ENCODE measurements at regions of chr11 and their contacts with region 1.

Region 1: DNA sequence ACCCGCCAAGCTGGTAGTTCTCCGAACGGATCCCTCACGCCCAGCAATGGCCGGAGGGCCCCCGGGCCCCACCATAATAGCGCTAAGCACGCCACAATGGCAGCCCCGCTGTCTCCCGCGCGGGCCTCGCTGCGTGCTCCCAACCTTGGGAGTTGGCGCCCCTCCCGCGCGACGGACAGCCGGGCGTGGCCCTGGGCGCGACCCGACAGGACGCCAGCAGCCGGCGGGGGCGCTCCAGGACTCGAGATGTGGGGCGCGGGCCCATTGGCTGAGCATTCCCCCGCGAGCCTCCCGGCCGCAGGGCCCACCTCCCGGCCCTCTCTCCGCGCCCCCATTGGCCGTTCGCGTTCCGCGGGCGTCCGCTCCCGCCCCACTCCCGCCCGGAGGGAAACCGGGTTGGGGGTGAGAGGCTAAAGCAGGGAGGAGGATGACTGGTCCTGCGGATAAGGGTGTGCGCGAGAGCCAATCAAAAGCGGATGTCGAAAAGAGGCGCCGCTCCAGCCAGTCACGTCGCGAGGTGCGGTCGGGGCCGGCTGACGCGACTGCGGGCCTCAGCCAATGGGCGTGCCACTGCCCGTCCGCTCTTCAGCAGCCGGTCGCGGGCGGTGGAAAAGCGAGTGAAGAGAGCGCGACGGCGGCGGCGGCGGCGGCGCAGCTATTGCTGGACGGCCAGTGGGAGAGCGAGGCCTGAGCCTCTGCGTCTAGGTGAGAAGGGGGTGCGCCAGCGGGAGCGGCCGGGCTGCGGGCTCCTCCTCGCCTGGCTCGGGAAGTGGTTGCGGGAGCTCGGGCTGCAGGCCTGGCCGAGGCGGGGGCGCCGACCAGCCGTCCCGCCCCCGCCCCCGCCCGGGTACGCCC is at the start of gene FAR1:
- DNase-seq: peak; percentile 89 to 97 (median 96)
- ATAC-seq: peak; percentile 94
- H3K4me3 ChIP-seq: peak within 1 kb of the TSS; percentile 90
- H3K4me3 Mint-ChIP-seq: peak within 1 kb of the TSS; percentile 90 to 100 (median 97)
- H3K27ac ChIP-seq: peak within 1 kb of the TSS; percentile 69
- H3K27ac Mint-ChIP-seq: peak within 1 kb of the TSS; percentile 69 to 99 (median 93)
- H3K4me1 ChIP-seq: peaks cover 14 to 17% of the 10 kb centered on the region in 2 donors
- H3K4me1 Mint-ChIP-seq: peaks cover 37 to 48% (median 45%) of the 10 kb centered on the region in 7 donors
- H3K27me3 ChIP-seq: no peaks in the 10 kb centered on the region
- H3K27me3 Mint-ChIP-seq: peaks cover 0 to 21% (median 7%) of the 10 kb centered on the region in 5 donors
- total RNA-seq, gene FAR1: 31.4 to 53.7 (median 33.8) TPM

Region 2: DNA sequence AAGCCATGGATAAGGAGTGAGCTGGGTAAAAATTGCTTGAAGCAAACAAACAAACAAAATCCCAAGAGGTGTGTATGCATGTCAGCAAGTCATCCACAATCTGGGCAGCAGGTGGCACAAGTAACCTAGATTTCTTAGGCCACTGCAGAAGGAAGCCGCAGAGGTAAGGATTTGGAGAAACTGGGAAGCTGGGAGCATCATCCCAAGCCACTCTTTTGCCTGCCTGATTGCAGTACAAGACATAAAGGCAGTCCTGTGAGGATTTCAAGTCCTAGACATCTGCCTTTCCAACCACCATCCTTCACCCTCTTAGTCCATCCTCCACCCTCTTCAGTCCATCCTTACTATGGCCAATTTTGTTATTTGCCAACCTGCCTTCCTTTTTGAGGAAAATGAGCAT is 457.9 kb before region 1 on chr11:
- CTCF ChIA-PET with region 1: no interaction called
- POLR2A ChIA-PET with region 1: no interaction called
- intact Hi-C with region 1: loop called in 1 of 2 experiments (anchors 10 kb)
- DNase-seq: peak in 3 of 9 donors; percentile 7 to 9 (median 8)
- ATAC-seq: no peak
- H3K4me3 ChIP-seq: no peak overlapping the region
- H3K4me3 Mint-ChIP-seq: no peak overlapping the region
- H3K27ac ChIP-seq: no peak overlapping the region
- H3K27ac Mint-ChIP-seq: peak overlapping the region in 1 of 9 donors; percentile 32
- H3K4me1 ChIP-seq: peaks cover 0 to 6% of the 10 kb centered on the region in 2 donors
- H3K4me1 Mint-ChIP-seq: peaks cover 16 to 33% (median 23%) of the 10 kb centered on the region in 7 donors
- H3K27me3 ChIP-seq: no peaks in the 10 kb centered on the region
- H3K27me3 Mint-ChIP-seq: peaks cover 0 to 3% (median 0%) of the 10 kb centered on the region in 5 donors

Region 3: DNA sequence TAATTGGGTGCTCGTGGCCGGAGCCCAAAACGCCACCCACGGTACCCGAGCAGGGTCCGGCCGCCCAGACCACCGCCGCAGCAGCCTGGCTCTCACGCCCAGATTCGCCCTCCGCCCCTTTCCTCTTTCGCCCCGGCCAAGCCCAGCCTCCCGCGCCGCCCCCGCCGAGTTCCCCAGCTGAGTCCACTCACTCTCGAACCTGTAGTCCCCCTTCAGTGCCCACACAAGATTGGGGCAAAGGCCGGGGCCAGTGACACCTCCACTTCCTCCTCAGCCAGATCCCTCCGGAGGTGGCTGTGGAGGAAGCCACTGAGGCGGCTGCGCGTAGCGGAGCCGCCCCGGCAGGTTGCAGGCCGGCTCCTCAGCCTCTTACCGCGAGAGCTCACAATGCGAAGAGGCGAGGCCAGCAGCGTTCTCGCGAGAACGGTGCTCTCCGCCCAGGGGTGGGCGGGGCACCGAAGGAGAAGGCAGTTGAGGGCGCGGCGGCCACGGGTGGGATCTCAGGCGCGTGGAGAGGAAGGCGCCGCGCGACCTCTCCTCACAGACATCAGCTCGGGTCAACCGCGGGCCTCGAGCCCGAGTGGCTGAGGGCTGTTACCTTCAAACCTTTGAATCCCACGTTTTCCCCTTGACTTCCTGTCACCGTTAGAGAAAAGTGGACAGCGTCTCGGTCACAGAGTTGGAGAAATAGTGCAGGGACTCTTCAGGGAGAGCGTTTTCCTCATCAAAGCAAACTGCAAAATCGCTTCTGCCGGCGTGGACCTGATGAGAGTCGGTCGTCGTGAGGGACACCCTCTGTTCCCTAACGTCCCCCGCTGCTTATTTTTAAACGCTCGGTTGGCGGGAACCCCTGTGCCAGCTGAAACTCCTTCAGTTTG is 205.2 kb before region 1 on chr11 and contains the start of gene BTBD10:
- CTCF ChIA-PET with region 1: no interaction called
- POLR2A ChIA-PET with region 1: no interaction called
- intact Hi-C with region 1: loop called (anchors 1 kb)
- DNase-seq: peak; percentile 87 to 94 (median 91)
- ATAC-seq: peak; percentile 100
- H3K4me3 ChIP-seq: peak within 1 kb of the TSS; percentile 98
- H3K4me3 Mint-ChIP-seq: peak within 1 kb of the TSS; percentile 97 to 100 (median 99)
- H3K27ac ChIP-seq: peak within 1 kb of the TSS; percentile 96
- H3K27ac Mint-ChIP-seq: peak within 1 kb of the TSS; percentile 93 to 100 (median 97)
- H3K4me1 ChIP-seq: peaks cover 18 to 20% of the 10 kb centered on the region in 2 donors
- H3K4me1 Mint-ChIP-seq: peaks cover 22 to 54% (median 46%) of the 10 kb centered on the region in 7 donors
- H3K27me3 ChIP-seq: no peaks in the 10 kb centered on the region
- H3K27me3 Mint-ChIP-seq: peaks cover 0 to 5% (median 0%) of the 10 kb centered on the region in 5 donors
- total RNA-seq, gene BTBD10: 16.3 to 25.2 (median 19.4) TPM

Region 4: DNA sequence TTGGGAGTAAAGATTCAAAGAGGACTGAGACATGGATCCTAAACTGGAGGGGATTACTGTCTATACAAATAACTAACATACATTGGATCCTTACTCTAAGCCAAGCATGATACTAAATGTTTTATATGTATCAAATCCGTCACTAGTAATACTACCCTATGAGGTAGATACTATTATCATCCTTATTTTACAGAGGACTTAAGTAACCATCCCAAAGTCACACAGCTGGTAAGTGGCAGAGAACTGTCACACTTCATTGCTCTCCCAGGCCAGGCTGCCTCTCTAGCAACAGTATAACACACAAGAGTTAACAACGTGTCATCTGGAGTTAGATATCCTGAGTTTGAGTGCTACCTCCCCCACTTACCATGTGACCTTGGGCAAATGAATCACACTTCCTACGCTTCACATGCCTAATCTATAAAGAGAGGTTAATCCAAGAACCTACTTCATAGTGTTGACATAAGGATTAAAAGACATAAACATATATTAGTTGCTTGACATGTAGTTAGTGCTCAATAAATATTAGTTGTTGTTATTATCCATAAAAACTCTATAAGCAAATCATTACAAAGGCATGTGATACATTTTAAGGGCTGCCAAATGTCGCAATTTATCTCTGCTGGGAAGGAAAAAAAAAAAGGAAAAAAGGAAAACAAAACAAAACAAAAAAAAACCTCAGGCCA is 260.4 kb after region 1 on chr11:
- CTCF ChIA-PET with region 1: no interaction called
- POLR2A ChIA-PET with region 1: interaction called, 4 read pairs
- intact Hi-C with region 1: loop called (anchors 5 to 10 kb)
- DNase-seq: no peak
- ATAC-seq: no peak
- H3K4me3 ChIP-seq: no peak overlapping the region
- H3K4me3 Mint-ChIP-seq: no peak overlapping the region
- H3K27ac ChIP-seq: no peak overlapping the region
- H3K27ac Mint-ChIP-seq: peak overlapping the region in 3 of 9 donors; percentile 0 to 49 (median 25)
- H3K4me1 ChIP-seq: peaks cover 21 to 25% of the 10 kb centered on the region in 2 donors
- H3K4me1 Mint-ChIP-seq: peaks cover 24 to 45% (median 39%) of the 10 kb centered on the region in 7 donors
- H3K27me3 ChIP-seq: no peaks in the 10 kb centered on the region
- H3K27me3 Mint-ChIP-seq: no peaks in the 10 kb centered on the region

Region 5: GRCh38 chr11:14075118-14076078 is 407.1 kb after region 1 on chr11:
- CTCF ChIA-PET with region 1: no interaction called
- POLR2A ChIA-PET with region 1: no interaction called
- intact Hi-C with region 1: loop called in 1 of 2 experiments (anchors 1 kb)
- DNase-seq: peak; percentile 8 to 79 (median 67)
- ATAC-seq: peak; percentile 94
- H3K4me3 ChIP-seq: peak overlapping the region; percentile 39
- H3K4me3 Mint-ChIP-seq: peak overlapping the region; percentile 49 to 90 (median 74)
- H3K27ac ChIP-seq: peak overlapping the region; percentile 11
- H3K27ac Mint-ChIP-seq: peak overlapping the region; percentile 56 to 94 (median 88)
- H3K4me1 ChIP-seq: peaks cover 0 to 63% of the 10 kb centered on the region in 2 donors
- H3K4me1 Mint-ChIP-seq: peaks cover 43 to 74% (median 67%) of the 10 kb centered on the region in 7 donors
- H3K27me3 ChIP-seq: no peaks in the 10 kb centered on the region
- H3K27me3 Mint-ChIP-seq: peaks cover 0 to 21% (median 0%) of the 10 kb centered on the region in 5 donors

Region 6: DNA sequence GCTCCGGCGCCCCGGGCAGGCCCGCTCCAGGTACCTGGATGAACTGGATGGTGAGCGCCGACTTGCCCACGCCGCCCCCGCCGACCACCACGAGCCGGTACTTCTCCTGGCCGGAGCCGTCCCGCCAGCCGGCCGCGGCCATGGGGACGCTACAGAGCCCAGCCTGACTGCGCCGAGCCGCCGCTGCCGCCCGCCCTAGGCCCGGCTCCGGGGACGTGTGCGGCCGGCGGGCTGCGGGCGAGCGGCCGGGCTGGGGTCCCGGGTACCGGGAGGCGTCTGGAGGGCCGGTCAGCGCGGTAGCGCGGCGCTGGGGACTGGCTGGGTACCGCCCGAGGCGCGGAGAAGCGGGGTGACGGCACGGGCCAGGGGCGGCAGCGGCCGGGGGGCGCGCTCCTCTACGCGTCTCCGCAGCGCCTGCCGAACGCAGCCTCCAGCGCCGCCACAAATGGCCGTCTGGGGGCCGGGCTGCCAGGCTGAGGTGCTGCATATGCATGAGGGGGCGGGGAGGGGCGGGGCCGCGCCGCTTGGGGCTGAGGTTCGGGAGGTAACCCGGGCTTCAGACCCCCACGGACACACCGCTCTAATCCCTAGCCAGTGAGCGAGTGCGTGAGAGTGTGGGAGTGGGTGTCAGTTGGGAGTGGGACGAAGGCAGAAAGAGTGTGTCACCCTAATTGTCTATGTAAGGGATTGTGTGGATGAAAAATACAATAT is 690.6 kb after region 1 on chr11 and contains the start of gene RRAS2:
- CTCF ChIA-PET with region 1: no interaction called
- POLR2A ChIA-PET with region 1: no interaction called
- intact Hi-C with region 1: loop called (anchors 1 kb)
- DNase-seq: peak; percentile 67 to 81 (median 78)
- ATAC-seq: peak; percentile 96
- H3K4me3 ChIP-seq: peak within 1 kb of the TSS; percentile 61
- H3K4me3 Mint-ChIP-seq: peak within 1 kb of the TSS; percentile 91 to 98 (median 95)
- H3K27ac ChIP-seq: peak within 1 kb of the TSS; percentile 72
- H3K27ac Mint-ChIP-seq: peak within 1 kb of the TSS; percentile 66 to 93 (median 86)
- H3K4me1 ChIP-seq: peaks cover 7 to 8% of the 10 kb centered on the region in 2 donors
- H3K4me1 Mint-ChIP-seq: peaks cover 25 to 55% (median 30%) of the 10 kb centered on the region in 7 donors
- H3K27me3 ChIP-seq: no peaks in the 10 kb centered on the region
- H3K27me3 Mint-ChIP-seq: peaks cover 0 to 6% (median 0%) of the 10 kb centered on the region in 5 donors
- total RNA-seq, gene RRAS2: 12.6 to 55.3 (median 22.2) TPM

Region 7: GRCh38 chr11:14892036-14892567 is 1223.8 kb after region 1 on chr11 and contains the start of gene CYP2R1:
- CTCF ChIA-PET with region 1: no interaction called
- POLR2A ChIA-PET with region 1: no interaction called
- intact Hi-C with region 1: loop called in 1 of 2 experiments (anchors 5 kb)
- DNase-seq: peak in 8 of 9 donors; percentile 76 to 91 (median 89)
- ATAC-seq: peak; percentile 93
- H3K4me3 ChIP-seq: peak within 1 kb of the TSS; percentile 83
- H3K4me3 Mint-ChIP-seq: peak within 1 kb of the TSS; percentile 88 to 99 (median 96)
- H3K27ac ChIP-seq: peak within 1 kb of the TSS; percentile 80
- H3K27ac Mint-ChIP-seq: peak within 1 kb of the TSS; percentile 91 to 98 (median 96)
- H3K4me1 ChIP-seq: peaks cover 3 to 27% of the 10 kb centered on the region in 2 donors
- H3K4me1 Mint-ChIP-seq: peaks cover 17 to 66% (median 44%) of the 10 kb centered on the region in 7 donors
- H3K27me3 ChIP-seq: no peaks in the 10 kb centered on the region
- H3K27me3 Mint-ChIP-seq: no peaks in the 10 kb centered on the region
- total RNA-seq, gene CYP2R1: 13.3 to 18.6 (median 14.7) TPM